ENCODE measurements at regions of chr12 and their contacts with region 1.

Region 1: GRCh38 chr12:110100315-110100970 is 23.7 kb upstream of the IFT81 start:
- DNase-seq: peak; percentile 71
- H3K4me3 ChIP-seq: no peak overlapping the region
- H3K27ac ChIP-seq: no peak overlapping the region
- H3K4me1 ChIP-seq: no peaks in the 10 kb centered on the region
- H3K27me3 ChIP-seq: no peaks in the 10 kb centered on the region
- CTCF ChIP-seq: peak; percentile 81

Region 2: DNA sequence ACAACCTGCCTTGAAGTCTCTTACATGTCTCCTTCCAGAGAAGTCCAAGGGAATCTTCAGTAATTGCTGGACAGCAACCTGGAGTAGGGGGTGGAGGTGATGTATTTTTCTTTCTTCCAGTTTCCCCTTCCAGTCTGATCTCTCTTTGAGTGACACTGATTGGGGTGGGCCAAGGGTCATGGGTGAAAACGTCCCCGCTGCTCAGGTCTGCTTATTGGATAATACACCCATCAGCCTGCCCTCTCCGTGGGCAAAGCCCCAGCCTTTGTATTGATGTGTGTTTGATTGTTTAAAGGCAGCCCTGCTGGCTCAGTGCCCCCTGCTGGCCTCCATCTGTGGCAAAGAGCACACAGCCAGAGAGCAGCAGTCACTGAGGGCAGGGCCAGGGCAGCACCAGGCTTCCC is 144.9 kb after region 1 on chr12:
- intact Hi-C with region 1: loop called (anchors 10 kb)
- DNase-seq: peak; percentile 84
- H3K4me3 ChIP-seq: no peak overlapping the region
- H3K27ac ChIP-seq: no peak overlapping the region
- H3K4me1 ChIP-seq: peaks cover 34% of the 10 kb centered on the region
- H3K27me3 ChIP-seq: no peaks in the 10 kb centered on the region
- CTCF ChIP-seq: peak; percentile 40

Region 3: GRCh38 chr12:110431957-110432587 is 331.6 kb after region 1 on chr12:
- intact Hi-C with region 1: loop called (anchors 2 kb)
- DNase-seq: no peak
- H3K4me3 ChIP-seq: peak overlapping the region; percentile 36
- H3K27ac ChIP-seq: peak overlapping the region; percentile 12
- H3K4me1 ChIP-seq: peaks cover 3% of the 10 kb centered on the region
- H3K27me3 ChIP-seq: no peaks in the 10 kb centered on the region
- CTCF ChIP-seq: no peak